Uterus (tissue), 4 donors: ENCODE measurements at regions of chr2 and their contacts with region 1.

Region 1: GRCh38 chr2:188978291-188979081 is 4.3 kb downstream of the COL3A1 start:
- DNase-seq: peak in 1 of 2 donors; percentile 61
- H3K4me3 ChIP-seq: peak overlapping the region; percentile 49 to 58
- H3K27ac ChIP-seq: peak overlapping the region; percentile 88 to 95
- H3K4me1 ChIP-seq: no peaks in the 10 kb centered on the region
- H3K27me3 ChIP-seq: no peaks in the 10 kb centered on the region
- CTCF ChIP-seq: peak; percentile 13 to 41 (median 33)
- POLR2A ChIP-seq: no peak

Region 2: DNA sequence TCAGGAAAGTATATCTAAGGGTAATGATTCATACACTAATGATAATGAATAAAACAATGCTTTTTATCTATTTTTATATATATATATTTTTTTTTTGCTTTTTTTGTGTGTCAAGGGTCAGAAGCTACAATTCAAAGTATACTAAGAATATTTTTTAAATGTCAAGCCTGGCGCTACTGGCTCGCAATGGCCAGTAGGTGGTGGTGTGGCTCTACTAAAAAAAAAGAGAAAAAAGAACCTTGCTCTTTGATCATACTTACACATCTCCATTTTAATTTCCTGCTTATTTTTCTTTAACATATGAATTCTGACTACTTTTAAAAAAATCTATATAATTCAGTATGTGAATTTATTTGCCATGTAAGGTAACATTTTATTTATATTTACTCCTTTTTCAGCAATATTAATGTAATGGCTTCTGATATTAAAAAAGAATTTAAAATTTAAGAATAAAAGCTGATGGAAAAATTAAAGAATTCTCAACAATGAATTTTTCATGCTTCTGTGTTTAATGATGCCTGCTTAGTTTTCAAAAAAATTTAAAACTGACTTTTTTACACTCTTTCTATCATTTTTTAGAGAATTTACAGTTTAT is 453.9 kb before region 1 on chr2:
- intact Hi-C with region 1: loop called (anchors 10 kb)
- DNase-seq: peak in 1 of 2 donors; percentile 35
- H3K4me3 ChIP-seq: no peak overlapping the region
- H3K27ac ChIP-seq: peak overlapping the region; percentile 68 to 79
- H3K4me1 ChIP-seq: peaks cover 0 to 6% of the 10 kb centered on the region in 2 donors
- H3K27me3 ChIP-seq: no peaks in the 10 kb centered on the region
- CTCF ChIP-seq: peak; percentile 57 to 88 (median 75)
- POLR2A ChIP-seq: no peak

Region 3: GRCh38 chr2:188788621-188789020 is 189.9 kb before region 1 on chr2:
- intact Hi-C with region 1: loop called (anchors 10 kb)
- DNase-seq: peak; percentile 78 to 89
- H3K4me3 ChIP-seq: no peak overlapping the region
- H3K27ac ChIP-seq: peak overlapping the region; percentile 87 to 93
- H3K4me1 ChIP-seq: peaks cover 0 to 5% of the 10 kb centered on the region in 2 donors
- H3K27me3 ChIP-seq: no peaks in the 10 kb centered on the region
- CTCF ChIP-seq: no peak
- POLR2A ChIP-seq: no peak